Vagina (tissue), 2 donors: ENCODE measurements at regions of chr2 and their contacts with region 1.

Region 1: GRCh38 chr2:218811382-218811781 is 20.2 kb downstream of the PRKAG3 start:
- DNase-seq: no peak
- H3K4me3 ChIP-seq: no peak overlapping the region
- H3K27ac ChIP-seq: no peak overlapping the region
- H3K4me1 ChIP-seq: peaks cover 10% of the 10 kb centered on the region
- H3K27me3 ChIP-seq: no peaks in the 10 kb centered on the region
- CTCF ChIP-seq: no peak
- POLR2A ChIP-seq: no peak

Region 2: GRCh38 chr2:217489145-217489960 is 1322.0 kb before region 1 on chr2:
- intact Hi-C with region 1: no loop called
- DNase-seq: no peak
- H3K4me3 ChIP-seq: no peak overlapping the region
- H3K27ac ChIP-seq: no peak overlapping the region
- H3K4me1 ChIP-seq: no peaks in the 10 kb centered on the region
- H3K27me3 ChIP-seq: no peaks in the 10 kb centered on the region
- CTCF ChIP-seq: no peak
- POLR2A ChIP-seq: no peak

Region 3: DNA sequence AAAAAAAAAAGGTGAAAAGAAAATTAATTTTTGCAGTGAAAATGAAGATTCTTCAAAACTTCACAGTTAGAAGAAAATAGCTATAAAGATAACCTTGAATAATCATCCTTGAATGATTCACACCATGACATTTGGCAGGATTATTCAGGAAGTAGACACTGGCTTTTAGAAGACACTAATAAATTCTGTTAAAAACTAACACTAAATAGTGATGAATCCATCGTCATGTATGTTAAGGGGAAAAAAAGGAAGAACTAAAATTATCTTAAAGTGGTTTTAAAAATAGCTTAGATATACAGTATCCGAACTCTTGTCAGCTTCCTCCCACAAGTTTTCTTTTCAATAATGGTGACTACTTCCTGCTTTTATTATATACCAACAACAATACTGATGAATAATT is 253.4 kb before region 1 on chr2:
- intact Hi-C with region 1: no loop called
- DNase-seq: no peak
- H3K4me3 ChIP-seq: no peak overlapping the region
- H3K27ac ChIP-seq: no peak overlapping the region
- H3K4me1 ChIP-seq: no peaks in the 10 kb centered on the region
- H3K27me3 ChIP-seq: no peaks in the 10 kb centered on the region
- CTCF ChIP-seq: no peak
- POLR2A ChIP-seq: no peak

Region 4: GRCh38 chr2:218761795-218762194 is 49.6 kb before region 1 on chr2:
- intact Hi-C with region 1: no loop called
- DNase-seq: no peak
- H3K4me3 ChIP-seq: no peak overlapping the region
- H3K27ac ChIP-seq: no peak overlapping the region
- H3K4me1 ChIP-seq: no peaks in the 10 kb centered on the region
- H3K27me3 ChIP-seq: no peaks in the 10 kb centered on the region
- CTCF ChIP-seq: no peak
- POLR2A ChIP-seq: no peak

Region 5: GRCh38 chr2:219335373-219335786 is 524.0 kb after region 1 on chr2:
- intact Hi-C with region 1: no loop called
- DNase-seq: no peak
- H3K4me3 ChIP-seq: no peak overlapping the region
- H3K27ac ChIP-seq: no peak overlapping the region
- H3K4me1 ChIP-seq: no peaks in the 10 kb centered on the region
- H3K27me3 ChIP-seq: peaks cover 4% of the 10 kb centered on the region
- CTCF ChIP-seq: no peak
- POLR2A ChIP-seq: no peak

Region 6: GRCh38 chr2:220215785-220216184 is 1404.4 kb after region 1 on chr2:
- intact Hi-C with region 1: loop called (anchors 10 kb)
- DNase-seq: no peak
- H3K4me3 ChIP-seq: no peak overlapping the region
- H3K27ac ChIP-seq: no peak overlapping the region
- H3K4me1 ChIP-seq: peaks cover 9% of the 10 kb centered on the region
- H3K27me3 ChIP-seq: no peaks in the 10 kb centered on the region
- CTCF ChIP-seq: no peak
- POLR2A ChIP-seq: no peak